ENCODE measurements at regions of chr2 and their contacts with region 1.

Region 1: GRCh38 chr2:9613291-9613690 is 17.5 kb downstream of the YWHAQ start:
- DNase-seq: no peak
- H3K4me3 ChIP-seq: no peak overlapping the region
- H3K27ac ChIP-seq: no peak overlapping the region
- H3K4me1 ChIP-seq: peaks cover 21% of the 10 kb centered on the region
- CTCF ChIP-seq: no peak

Region 2: DNA sequence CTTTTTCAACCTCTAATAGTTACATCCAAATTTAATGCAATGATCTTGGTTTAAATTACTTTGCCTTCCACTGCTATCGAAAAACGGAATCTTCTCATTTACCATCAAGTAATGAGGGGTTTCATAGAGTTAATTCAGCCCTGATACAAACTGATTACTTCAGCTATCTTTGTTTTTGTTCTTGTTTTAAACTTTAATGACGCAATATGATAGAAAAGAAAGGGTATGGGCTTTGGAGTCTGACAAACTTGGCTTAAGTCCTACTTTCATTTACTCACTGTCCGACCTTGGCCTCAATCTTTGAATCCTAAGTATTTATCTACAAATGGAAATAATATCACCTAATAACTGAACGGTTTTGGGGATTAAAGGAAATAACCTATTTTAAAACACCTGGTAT is 73.8 kb before region 1 on chr2:
- CTCF ChIA-PET with region 1: no interaction called
- POLR2A ChIA-PET with region 1: no interaction called
- intact Hi-C with region 1: no loop called
- DNase-seq: no peak
- H3K4me3 ChIP-seq: peak overlapping the region; percentile 31
- H3K27ac ChIP-seq: peak overlapping the region; percentile 97
- H3K4me1 ChIP-seq: peaks cover 90% of the 10 kb centered on the region
- CTCF ChIP-seq: no peak

Region 3: DNA sequence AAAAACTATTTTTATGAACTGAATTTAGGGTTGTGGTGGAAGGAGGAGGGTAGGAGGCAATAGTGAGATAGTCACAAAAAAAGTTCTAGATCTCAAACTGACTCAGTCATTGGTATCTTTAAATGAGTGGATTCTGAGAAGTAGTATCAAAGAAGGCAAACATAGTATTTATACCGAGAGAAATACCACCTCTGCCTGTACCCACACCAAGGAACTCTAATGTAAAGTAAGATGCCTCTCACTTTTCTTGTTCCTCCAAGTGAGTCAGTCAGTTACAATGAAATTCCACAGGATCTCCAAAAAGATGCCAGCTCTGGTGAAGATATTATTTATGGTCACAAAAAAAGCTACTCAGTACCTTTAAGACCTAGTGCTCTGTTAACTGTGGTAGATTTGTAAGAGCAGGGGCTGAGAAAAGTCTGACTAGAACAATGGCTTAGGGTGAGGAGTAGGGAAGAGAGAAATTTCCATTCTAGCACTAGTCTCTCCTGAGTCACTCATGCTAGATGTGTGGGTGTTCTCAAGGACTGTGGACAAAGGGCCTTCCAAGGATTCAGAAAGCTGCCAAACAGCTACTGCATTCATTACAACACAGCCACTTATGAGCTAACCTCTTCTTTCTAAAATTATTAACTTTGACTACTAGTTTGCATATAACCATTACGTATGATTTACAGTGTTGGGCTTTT is 18.8 kb before region 1 on chr2:
- CTCF ChIA-PET with region 1: no interaction called
- POLR2A ChIA-PET with region 1: interaction called, 14 read pairs
- intact Hi-C with region 1: no loop called
- DNase-seq: no peak
- H3K4me3 ChIP-seq: no peak overlapping the region
- H3K27ac ChIP-seq: no peak overlapping the region
- H3K4me1 ChIP-seq: peaks cover 14% of the 10 kb centered on the region
- CTCF ChIP-seq: no peak